CD4-positive, alpha-beta memory T cell (primary cell): ENCODE measurements at regions of chr14 and their contacts with region 1.

Region 1: DNA sequence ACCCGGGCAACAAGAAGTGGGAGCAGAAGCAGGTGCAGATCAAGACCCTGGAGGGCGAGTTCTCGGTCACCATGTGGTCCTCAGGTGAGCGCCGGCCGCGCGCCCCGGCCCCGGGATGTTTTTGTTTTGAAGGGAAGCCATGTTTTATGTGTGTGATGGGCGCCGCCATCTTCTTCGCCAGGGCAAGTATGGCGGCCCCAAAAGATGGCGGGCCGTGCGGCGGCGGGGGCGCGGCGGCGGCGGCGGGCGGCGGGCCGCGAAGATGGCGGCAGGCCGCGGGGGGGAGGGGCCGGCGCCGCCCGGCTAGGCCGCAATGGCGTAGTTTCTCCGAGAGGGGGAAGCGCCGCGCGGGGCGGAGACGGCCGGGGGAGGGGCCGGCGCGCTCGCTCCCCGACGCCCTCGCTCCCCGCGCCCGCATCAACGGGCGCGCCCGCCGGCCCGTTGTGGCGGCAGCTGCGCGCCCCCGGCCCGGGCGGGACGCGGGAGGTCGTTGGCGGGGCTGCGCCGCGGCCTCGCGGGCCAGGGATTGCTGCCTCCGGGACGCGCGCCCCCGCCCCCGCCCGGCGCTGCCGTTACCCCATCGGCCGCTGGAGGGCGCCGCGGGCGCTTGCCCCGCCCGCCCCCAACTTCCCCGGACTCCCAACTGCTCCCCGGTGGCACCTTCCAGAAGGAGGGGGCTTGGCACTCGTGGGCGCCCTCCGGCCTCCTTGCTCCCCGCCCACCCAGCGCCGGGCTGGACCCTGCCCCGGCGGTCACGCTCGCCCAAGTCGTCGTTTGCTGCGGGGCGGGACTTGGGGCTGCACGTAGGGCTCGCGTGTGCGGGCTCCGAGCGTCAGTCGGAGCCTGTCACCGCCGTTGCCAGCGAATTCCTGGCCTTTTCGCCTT is 1.1 kb downstream of the YY1 start:
- DNase-seq: peak; percentile 86 to 91 (median 88)
- H3K4me3 ChIP-seq: peak overlapping the region; percentile 42 to 92
- H3K4me3 Mint-ChIP-seq: peak overlapping the region; percentile 86 to 96 (median 92)
- H3K27ac ChIP-seq: peak overlapping the region; percentile 84
- H3K27ac Mint-ChIP-seq: peak overlapping the region; percentile 95 to 98 (median 96)
- H3K4me1 ChIP-seq: peaks cover 67% of the 10 kb centered on the region
- H3K4me1 Mint-ChIP-seq: peaks cover 37 to 65% (median 48%) of the 10 kb centered on the region in 4 donors
- H3K27me3 ChIP-seq: no peaks in the 10 kb centered on the region
- H3K27me3 Mint-ChIP-seq: no peaks in the 10 kb centered on the region

Region 2: DNA sequence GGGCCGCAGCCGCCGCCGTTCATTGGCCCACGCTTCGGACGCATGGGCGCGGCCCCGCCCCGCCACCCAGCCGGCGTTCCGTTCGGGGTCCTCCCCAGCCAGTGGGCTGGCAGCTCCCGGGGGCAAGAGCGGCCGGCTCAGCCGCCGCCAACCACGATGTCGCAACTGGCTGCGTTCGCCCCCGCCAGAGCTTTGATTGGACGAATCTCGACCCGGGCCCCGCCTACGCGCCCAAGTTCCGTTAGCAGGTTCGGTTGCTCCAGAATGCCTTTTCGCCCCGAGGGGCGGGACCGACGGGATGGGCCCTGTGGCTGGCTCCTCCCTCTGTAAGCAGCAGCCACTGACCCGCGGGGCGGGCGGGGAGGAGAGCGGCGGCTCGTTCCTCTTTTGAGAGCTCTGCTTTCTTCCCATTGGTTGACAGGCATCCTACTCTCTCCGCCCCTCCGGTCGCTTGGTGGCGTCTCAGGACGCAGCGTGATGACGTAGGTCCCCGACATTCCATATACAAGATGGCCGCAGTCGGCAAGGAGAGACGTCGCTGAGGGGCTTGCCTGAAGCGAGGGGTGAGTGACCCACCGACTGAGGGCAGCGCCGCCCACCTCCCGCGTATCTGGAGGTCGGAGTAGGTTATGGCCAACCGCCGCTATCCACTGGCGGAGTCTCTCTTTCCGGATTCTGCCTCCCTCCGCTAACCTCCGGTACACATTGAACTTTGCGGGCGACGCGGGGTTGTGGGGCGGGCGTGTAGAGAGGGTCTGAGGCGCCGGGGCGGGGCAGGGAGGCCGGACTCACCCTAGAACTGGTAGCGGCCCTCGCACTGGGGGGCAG is 759.0 kb before region 1 on chr14 and contains the start of gene CCNK:
- CTCF ChIA-PET with region 1: no interaction called
- POLR2A ChIA-PET with region 1: no interaction called
- intact Hi-C with region 1: loop called (anchors 10 kb)
- DNase-seq: peak; percentile 100
- H3K4me3 ChIP-seq: peak within 1 kb of the TSS; percentile 88 to 97
- H3K4me3 Mint-ChIP-seq: peak within 1 kb of the TSS; percentile 94 to 99 (median 98)
- H3K27ac ChIP-seq: peak within 1 kb of the TSS; percentile 98
- H3K27ac Mint-ChIP-seq: peak within 1 kb of the TSS; percentile 98 to 99 (median 99)
- H3K4me1 ChIP-seq: peaks cover 68% of the 10 kb centered on the region
- H3K4me1 Mint-ChIP-seq: peaks cover 39 to 80% (median 60%) of the 10 kb centered on the region in 4 donors
- H3K27me3 ChIP-seq: no peaks in the 10 kb centered on the region
- H3K27me3 Mint-ChIP-seq: no peaks in the 10 kb centered on the region
- total RNA-seq, gene CCNK: 77.1 to 83.4 TPM

Region 3: DNA sequence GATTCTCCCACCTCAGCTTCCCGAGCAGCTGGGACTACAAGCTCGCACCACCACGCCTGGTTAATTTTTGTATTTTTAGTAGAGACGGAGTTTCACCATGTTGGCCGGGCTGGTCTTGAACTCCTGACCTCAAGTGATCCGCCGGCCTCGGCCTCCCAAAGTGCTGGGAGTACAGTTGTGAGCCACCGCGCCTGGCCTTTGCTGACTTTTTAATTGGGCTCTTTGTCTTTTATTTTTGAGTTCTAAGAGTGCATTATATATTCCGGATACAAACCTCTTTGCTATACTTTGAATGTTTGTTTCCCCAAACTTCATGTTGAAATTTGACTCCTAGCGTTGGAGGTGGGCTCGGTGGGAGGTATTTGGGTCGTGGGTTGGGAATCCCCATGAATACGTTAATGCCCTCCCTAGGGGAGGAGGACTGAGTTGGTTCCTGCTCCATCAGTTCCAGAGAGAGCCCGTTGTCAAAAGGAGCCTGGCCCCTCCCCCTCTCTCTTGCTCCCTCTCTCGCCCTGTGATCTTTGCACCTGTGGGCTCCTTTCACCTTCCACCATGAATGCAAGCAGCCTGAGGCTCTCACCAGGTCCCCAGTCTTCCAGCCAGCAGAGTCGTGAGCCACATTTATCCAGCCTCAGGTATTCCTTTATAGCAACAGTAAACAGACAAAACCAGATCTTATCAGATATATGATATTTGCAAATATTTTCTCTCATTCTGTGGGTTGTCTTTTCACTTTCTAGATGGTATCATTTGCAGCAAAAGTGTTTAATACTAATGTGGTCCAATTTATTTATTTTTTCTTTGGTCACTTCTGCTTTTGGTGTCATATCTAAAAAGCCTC is 278.0 kb before region 1 on chr14:
- CTCF ChIA-PET with region 1: no interaction called
- POLR2A ChIA-PET with region 1: no interaction called
- intact Hi-C with region 1: no loop called
- DNase-seq: no peak
- H3K4me3 ChIP-seq: no peak overlapping the region
- H3K4me3 Mint-ChIP-seq: no peak overlapping the region
- H3K27ac ChIP-seq: no peak overlapping the region
- H3K27ac Mint-ChIP-seq: no peak overlapping the region
- H3K4me1 ChIP-seq: no peaks in the 10 kb centered on the region
- H3K4me1 Mint-ChIP-seq: no peaks in the 10 kb centered on the region
- H3K27me3 ChIP-seq: no peaks in the 10 kb centered on the region
- H3K27me3 Mint-ChIP-seq: peaks cover 19 to 39% of the 10 kb centered on the region in 2 donors

Region 4: DNA sequence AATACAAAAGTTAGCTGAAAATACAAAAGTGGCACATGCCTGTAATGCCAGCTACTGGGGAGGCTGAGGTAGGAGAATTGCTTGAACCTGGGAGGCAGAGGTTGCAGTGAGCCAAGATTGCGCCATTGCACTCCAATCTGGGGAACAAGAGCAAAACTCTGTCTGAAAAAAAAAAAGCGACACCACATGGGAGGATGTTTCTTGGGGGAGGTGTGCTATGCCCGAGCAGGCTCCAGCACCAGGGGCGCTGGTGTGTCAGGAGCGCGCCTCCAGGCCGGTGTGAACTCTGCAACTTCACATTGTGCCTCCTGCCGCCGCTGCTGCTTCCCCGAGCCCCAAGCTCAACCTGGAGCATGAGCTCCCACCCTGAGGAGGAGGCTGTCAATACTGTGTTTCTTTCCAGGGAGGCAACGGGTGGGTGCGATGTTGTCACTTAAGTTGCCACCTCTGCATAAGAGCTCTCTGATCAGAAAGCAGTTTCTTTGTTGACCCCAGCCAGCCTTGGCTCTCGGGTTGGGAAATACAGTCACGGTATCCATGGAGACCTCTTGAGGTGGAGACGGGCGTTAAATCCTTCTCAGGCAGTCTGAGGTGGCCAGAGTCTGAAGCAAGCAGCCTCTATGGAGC is 99.5 kb before region 1 on chr14:
- CTCF ChIA-PET with region 1: no interaction called
- POLR2A ChIA-PET with region 1: no interaction called
- intact Hi-C with region 1: loop called (anchors 10 kb)
- DNase-seq: no peak
- H3K4me3 ChIP-seq: no peak overlapping the region
- H3K4me3 Mint-ChIP-seq: no peak overlapping the region
- H3K27ac ChIP-seq: no peak overlapping the region
- H3K27ac Mint-ChIP-seq: peak overlapping the region in 1 of 7 donors; percentile 77
- H3K4me1 ChIP-seq: peaks cover 3% of the 10 kb centered on the region
- H3K4me1 Mint-ChIP-seq: peaks cover 0 to 22% (median 7%) of the 10 kb centered on the region in 4 donors
- H3K27me3 ChIP-seq: no peaks in the 10 kb centered on the region
- H3K27me3 Mint-ChIP-seq: no peaks in the 10 kb centered on the region

Region 5: GRCh38 chr14:100221533-100222223 is 18.4 kb before region 1 on chr14:
- CTCF ChIA-PET with region 1: interaction called, 75 read pairs
- POLR2A ChIA-PET with region 1: interaction called, 306 read pairs
- intact Hi-C with region 1: loop called (anchors 1 kb)
- DNase-seq: peak; percentile 67 to 81 (median 76)
- H3K4me3 ChIP-seq: peak overlapping the region; percentile 82 to 92
- H3K4me3 Mint-ChIP-seq: no peak overlapping the region
- H3K27ac ChIP-seq: peak overlapping the region; percentile 76
- H3K27ac Mint-ChIP-seq: no peak overlapping the region
- H3K4me1 ChIP-seq: peaks cover 43% of the 10 kb centered on the region
- H3K4me1 Mint-ChIP-seq: peaks cover 7 to 29% (median 18%) of the 10 kb centered on the region in 4 donors
- H3K27me3 ChIP-seq: no peaks in the 10 kb centered on the region
- H3K27me3 Mint-ChIP-seq: no peaks in the 10 kb centered on the region

Region 6: GRCh38 chr14:100348784-100349704 is 109.0 kb after region 1 on chr14:
- CTCF ChIA-PET with region 1: no interaction called
- POLR2A ChIA-PET with region 1: no interaction called
- intact Hi-C with region 1: no loop called
- DNase-seq: no peak
- H3K4me3 ChIP-seq: no peak overlapping the region
- H3K4me3 Mint-ChIP-seq: no peak overlapping the region
- H3K27ac ChIP-seq: no peak overlapping the region
- H3K27ac Mint-ChIP-seq: no peak overlapping the region
- H3K4me1 ChIP-seq: no peaks in the 10 kb centered on the region
- H3K4me1 Mint-ChIP-seq: no peaks in the 10 kb centered on the region
- H3K27me3 ChIP-seq: no peaks in the 10 kb centered on the region
- H3K27me3 Mint-ChIP-seq: no peaks in the 10 kb centered on the region

Region 7: GRCh38 chr14:100375963-100376735 is 136.1 kb after region 1 on chr14:
- CTCF ChIA-PET with region 1: interaction called, 4 read pairs
- POLR2A ChIA-PET with region 1: no interaction called
- intact Hi-C with region 1: loop called (anchors 1 kb)
- DNase-seq: peak; percentile 88 to 93 (median 90)
- H3K4me3 ChIP-seq: peak within 1 kb of the TSS; percentile 83 to 92
- H3K4me3 Mint-ChIP-seq: peak within 1 kb of the TSS; percentile 92 to 97 (median 94)
- H3K27ac ChIP-seq: peak within 1 kb of the TSS; percentile 79
- H3K27ac Mint-ChIP-seq: peak within 1 kb of the TSS; percentile 90 to 96 (median 94)
- H3K4me1 ChIP-seq: peaks cover 28% of the 10 kb centered on the region
- H3K4me1 Mint-ChIP-seq: peaks cover 23 to 53% (median 32%) of the 10 kb centered on the region in 4 donors
- H3K27me3 ChIP-seq: no peaks in the 10 kb centered on the region
- H3K27me3 Mint-ChIP-seq: no peaks in the 10 kb centered on the region